Stomach (tissue), 19 donors: ENCODE measurements at regions of chr20 and their contacts with region 1.

Region 1: DNA sequence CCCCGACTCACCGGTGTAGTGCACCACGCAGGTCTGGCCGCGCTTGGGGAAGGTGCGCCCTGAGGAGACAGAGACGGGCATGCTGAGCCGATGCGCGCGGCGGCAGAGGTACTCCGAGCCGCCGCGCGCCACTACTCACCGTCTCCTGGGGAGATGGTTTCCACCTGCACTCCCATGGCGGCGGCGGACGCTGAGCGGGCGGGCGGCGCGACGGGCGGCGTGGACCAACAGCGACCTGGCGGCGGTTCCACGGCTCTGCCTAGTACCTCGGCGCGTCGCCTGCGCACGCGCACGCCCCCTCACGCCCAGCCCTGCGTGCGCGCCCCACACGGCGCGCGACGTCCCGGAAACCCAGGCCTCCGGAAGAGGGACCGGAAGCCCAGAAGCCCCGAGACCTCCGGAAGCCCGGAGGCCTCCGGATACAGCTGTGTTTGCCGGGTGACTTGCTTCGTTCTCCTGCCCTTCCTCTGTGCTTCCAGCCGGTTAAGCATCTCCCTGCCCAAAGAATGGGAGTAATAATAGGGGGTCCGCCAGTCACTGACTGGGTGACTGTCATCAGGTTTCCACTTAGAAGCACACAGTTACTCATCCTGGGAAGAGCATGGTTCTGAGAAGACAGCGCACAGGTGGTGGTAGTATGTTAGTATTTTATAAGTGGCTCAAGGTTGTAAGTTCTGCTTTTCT is at the start of gene FKBP1A:
- DNase-seq: peak; percentile 95 to 97
- H3K4me3 ChIP-seq: peak within 1 kb of the TSS; percentile 89 to 99 (median 90)
- H3K27ac ChIP-seq: peak within 1 kb of the TSS; percentile 88 to 94 (median 90)
- H3K4me1 ChIP-seq: peaks cover 48 to 55% (median 50%) of the 10 kb centered on the region in 4 donors
- H3K27me3 ChIP-seq: peaks cover 0 to 11% (median 0%) of the 10 kb centered on the region in 3 donors
- CTCF ChIP-seq: peak in 2 of 7 experiments; percentile 8 to 39
- EP300 ChIP-seq: no peak
- POLR2A ChIP-seq: peak in 1 of 4 donors; percentile 40
- total RNA-seq, gene FKBP1A: 33.0 to 280 (median 68.3) TPM

Region 2: GRCh38 chr20:1466211-1467081 is 73.5 kb after region 1 on chr20 and contains the start of gene NSFL1C:
- intact Hi-C with region 1: loop called (anchors 10 kb)
- DNase-seq: peak; percentile 98 to 99
- H3K4me3 ChIP-seq: peak within 1 kb of the TSS; percentile 91 to 100 (median 100)
- H3K27ac ChIP-seq: peak within 1 kb of the TSS; percentile 86 to 95 (median 91)
- H3K4me1 ChIP-seq: peaks cover 45 to 87% (median 75%) of the 10 kb centered on the region in 4 donors
- H3K27me3 ChIP-seq: no peaks in the 10 kb centered on the region
- CTCF ChIP-seq: peak in 5 of 7 experiments; percentile 52 to 99 (median 95)
- EP300 ChIP-seq: peak; percentile 3
- POLR2A ChIP-seq: no peak
- total RNA-seq, gene NSFL1C: 13.4 to 83.4 (median 33.4) TPM

Region 3: GRCh38 chr20:1920252-1920651 is 527.3 kb after region 1 on chr20:
- intact Hi-C with region 1: no loop called
- DNase-seq: peak in 1 of 2 donors; percentile 57
- H3K4me3 ChIP-seq: no peak overlapping the region
- H3K27ac ChIP-seq: no peak overlapping the region
- H3K4me1 ChIP-seq: peaks cover 0 to 20% (median 6%) of the 10 kb centered on the region in 4 donors
- H3K27me3 ChIP-seq: no peaks in the 10 kb centered on the region
- CTCF ChIP-seq: no peak
- EP300 ChIP-seq: no peak
- POLR2A ChIP-seq: no peak